ENCODE measurements at regions of chr11 and their contacts with region 1.

Region 1: DNA sequence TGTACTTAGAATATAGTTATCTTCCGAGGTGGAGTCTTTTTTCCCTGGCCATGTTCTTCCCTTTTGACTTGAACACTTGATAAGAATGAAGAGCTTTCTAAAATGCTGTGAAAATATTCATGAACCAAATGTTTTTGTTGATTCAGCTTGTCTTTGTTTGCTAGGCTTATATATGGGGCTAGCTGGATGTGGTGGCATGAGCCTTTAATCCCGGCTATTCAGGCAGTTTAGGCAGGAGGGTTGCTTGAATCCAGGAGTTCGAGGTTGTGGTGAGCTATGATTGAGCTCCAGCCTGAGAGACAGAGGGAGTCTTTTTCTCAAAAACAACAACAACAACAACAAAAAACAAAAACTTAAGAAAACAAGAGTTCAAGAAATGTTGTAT is 23.1 kb downstream of the CBL start:
- DNase-seq: no peak
- ATAC-seq: peak in 1 of 3 donors; percentile 12
- H3K4me3 ChIP-seq: no peak overlapping the region
- H3K4me3 Mint-ChIP-seq: peak overlapping the region; percentile 72
- H3K27ac ChIP-seq: no peak overlapping the region
- H3K27ac Mint-ChIP-seq: peak overlapping the region; percentile 48 to 79
- H3K4me1 ChIP-seq: peaks cover 16% of the 10 kb centered on the region
- H3K4me1 Mint-ChIP-seq: peaks cover 28 to 38% of the 10 kb centered on the region in 2 donors
- H3K27me3 ChIP-seq: no peaks in the 10 kb centered on the region
- H3K27me3 Mint-ChIP-seq: no peaks in the 10 kb centered on the region
- CTCF ChIP-seq: no peak

Region 2: GRCh38 chr11:119262668-119263351 is 33.5 kb after region 1 on chr11:
- intact Hi-C with region 1: loop called (anchors 5 kb)
- DNase-seq: peak in 1 of 2 donors; percentile 54
- ATAC-seq: peak; percentile 39 to 59 (median 50)
- H3K4me3 ChIP-seq: no peak overlapping the region
- H3K4me3 Mint-ChIP-seq: no peak overlapping the region
- H3K27ac ChIP-seq: peak overlapping the region; percentile 36
- H3K27ac Mint-ChIP-seq: no peak overlapping the region
- H3K4me1 ChIP-seq: peaks cover 20% of the 10 kb centered on the region
- H3K4me1 Mint-ChIP-seq: peaks cover 31 to 41% of the 10 kb centered on the region in 2 donors
- H3K27me3 ChIP-seq: no peaks in the 10 kb centered on the region
- H3K27me3 Mint-ChIP-seq: no peaks in the 10 kb centered on the region
- CTCF ChIP-seq: no peak

Region 3: GRCh38 chr11:119284344-119285157 is 55.3 kb after region 1 on chr11:
- intact Hi-C with region 1: no loop called
- DNase-seq: peak in 1 of 2 donors; percentile 77
- ATAC-seq: peak; percentile 57 to 64 (median 57)
- H3K4me3 ChIP-seq: no peak overlapping the region
- H3K4me3 Mint-ChIP-seq: no peak overlapping the region
- H3K27ac ChIP-seq: no peak overlapping the region
- H3K27ac Mint-ChIP-seq: no peak overlapping the region
- H3K4me1 ChIP-seq: peaks cover 15% of the 10 kb centered on the region
- H3K4me1 Mint-ChIP-seq: peaks cover 13 to 20% of the 10 kb centered on the region in 2 donors
- H3K27me3 ChIP-seq: no peaks in the 10 kb centered on the region
- H3K27me3 Mint-ChIP-seq: no peaks in the 10 kb centered on the region
- CTCF ChIP-seq: no peak

Region 4: DNA sequence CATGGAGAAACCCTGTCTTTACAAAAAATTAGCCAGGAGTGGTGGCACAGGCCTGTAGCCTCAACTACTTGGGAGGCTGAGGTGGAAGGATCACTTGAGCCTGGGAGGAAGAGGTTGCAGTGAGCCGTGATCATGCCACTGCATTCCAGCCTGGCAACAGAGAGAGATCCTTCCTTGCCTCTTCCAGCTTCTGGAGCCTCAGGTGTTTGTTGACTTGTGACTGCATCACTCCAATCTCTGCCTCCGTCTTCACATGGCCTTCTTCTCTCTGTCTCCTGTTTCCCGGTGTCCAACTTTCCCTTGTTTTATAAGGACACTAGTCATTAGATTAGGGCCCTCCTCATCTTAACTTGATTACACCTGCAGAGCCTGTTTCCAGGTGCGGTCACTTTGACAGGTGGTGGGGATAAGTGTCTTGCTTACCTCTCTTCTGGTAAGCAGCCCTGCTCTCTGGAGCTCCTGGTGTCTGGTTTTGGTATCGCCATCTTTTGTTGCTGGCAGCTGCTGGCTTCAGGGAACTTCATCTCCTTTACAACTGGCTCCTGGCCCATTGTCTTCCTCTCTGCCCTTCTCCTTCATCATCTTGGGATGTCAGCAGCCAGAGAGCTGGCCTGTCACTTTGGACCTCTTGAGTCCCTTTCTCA is 160.5 kb after region 1 on chr11:
- intact Hi-C with region 1: no loop called
- DNase-seq: peak in 1 of 2 donors; percentile 50
- ATAC-seq: peak in 2 of 3 donors; percentile 44 to 52
- H3K4me3 ChIP-seq: no peak overlapping the region
- H3K4me3 Mint-ChIP-seq: no peak overlapping the region
- H3K27ac ChIP-seq: no peak overlapping the region
- H3K27ac Mint-ChIP-seq: no peak overlapping the region
- H3K4me1 ChIP-seq: no peaks in the 10 kb centered on the region
- H3K4me1 Mint-ChIP-seq: no peaks in the 10 kb centered on the region
- H3K27me3 ChIP-seq: no peaks in the 10 kb centered on the region
- H3K27me3 Mint-ChIP-seq: peaks cover 10 to 34% of the 10 kb centered on the region in 2 donors
- CTCF ChIP-seq: peak; percentile 33

Measured in natural killer cell (primary cell).